Spleen (tissue), 13 donors: ENCODE measurements at regions of chr6 and their contacts with region 1.

Region 1: DNA sequence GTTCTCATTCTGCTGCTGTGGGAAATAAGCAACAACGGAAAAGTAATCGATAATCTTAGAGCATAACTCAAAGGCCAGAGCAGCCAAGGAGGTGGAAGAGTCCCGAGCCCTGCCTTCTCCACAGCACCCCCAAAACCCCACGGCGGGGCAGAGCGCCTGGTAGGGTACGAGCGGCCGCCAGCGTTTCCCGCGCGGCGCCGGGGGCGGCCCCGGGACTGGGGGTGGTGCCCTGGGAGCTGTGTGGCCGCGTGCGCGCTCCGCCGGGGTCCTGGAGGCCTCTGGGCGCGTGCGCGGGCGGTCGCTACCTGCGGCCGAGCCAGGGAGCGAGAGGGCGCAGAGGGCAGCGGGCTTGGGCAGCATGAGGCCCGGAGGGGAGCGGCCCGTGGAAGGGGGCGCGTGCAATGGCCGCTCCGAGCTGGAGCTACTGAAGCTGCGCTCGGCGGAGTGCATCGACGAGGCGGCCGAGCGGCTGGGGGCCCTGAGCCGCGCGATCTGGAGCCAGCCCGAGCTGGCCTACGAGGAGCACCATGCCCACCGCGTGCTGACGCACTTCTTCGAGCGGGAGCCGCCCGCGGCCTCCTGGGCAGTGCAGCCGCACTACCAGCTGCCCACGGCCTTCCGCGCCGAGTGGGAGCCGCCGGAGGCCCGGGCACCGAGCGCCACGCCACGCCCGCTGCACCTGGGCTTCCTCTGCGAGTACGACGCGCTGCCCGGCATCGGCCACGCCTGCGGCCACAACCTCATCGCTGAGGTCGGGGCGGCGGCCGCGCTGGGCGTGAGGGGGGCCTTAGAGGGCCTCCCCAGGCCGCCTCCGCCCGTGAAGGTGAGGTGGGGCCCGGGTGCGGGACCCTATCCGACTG is at the start of gene PM20D2:
- DNase-seq: peak; percentile 93
- H3K4me3 ChIP-seq: peak within 1 kb of the TSS; percentile 70 to 97 (median 86)
- H3K27ac ChIP-seq: peak within 1 kb of the TSS; percentile 66 to 86 (median 82)
- H3K4me1 ChIP-seq: peaks cover 3 to 34% (median 17%) of the 10 kb centered on the region in 6 donors
- H3K27me3 ChIP-seq: no peaks in the 10 kb centered on the region
- CTCF ChIP-seq: no peak
- POLR2A ChIP-seq: no peak
- total RNA-seq, gene PM20D2: 5.8 to 14.6 (median 8.3) TPM

Region 2: DNA sequence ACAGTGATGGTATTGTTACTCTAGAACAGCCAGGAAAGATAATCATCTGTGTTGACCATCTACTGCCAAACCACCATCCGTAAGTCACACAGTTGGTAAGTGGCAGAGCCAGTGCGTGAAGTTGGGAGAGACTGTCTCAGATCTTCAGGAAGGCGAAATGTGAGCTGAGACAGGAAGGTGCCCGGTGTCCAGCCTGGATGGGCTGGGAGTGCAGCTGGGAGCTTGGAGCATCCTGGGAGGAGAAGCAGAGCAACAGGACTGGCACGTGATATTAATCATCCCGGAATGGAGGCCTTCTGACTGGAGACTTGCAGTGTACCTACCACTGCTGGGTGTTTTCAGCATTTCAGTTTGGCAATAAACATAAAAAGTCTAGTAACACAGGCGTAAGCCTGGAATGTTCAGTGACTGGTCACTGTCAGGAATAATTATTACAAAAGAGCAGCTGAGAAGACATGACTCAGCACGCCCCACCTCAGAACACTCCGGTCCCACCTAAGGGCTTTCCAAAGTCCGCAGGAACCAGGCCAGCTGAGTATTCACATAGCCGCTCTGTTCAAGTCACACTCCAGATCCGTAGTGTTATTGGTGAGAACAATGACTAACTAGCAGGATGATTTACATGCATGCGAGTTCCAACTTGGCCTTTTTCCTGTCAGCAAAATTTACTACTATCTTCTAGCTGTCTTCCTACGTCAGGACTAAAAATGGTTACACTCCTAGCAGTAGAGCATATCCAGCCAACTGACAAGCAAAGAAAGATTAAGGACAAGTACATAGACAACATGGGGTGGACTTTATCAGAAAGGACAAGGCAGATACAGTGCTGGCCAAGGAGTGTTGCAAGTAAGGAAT is 110.5 kb before region 1 on chr6:
- intact Hi-C with region 1: no loop called
- DNase-seq: no peak
- H3K4me3 ChIP-seq: peak overlapping the region in 1 of 8 donors; percentile 38
- H3K27ac ChIP-seq: peak overlapping the region; percentile 51 to 89 (median 82)
- H3K4me1 ChIP-seq: peaks cover 0 to 47% (median 22%) of the 10 kb centered on the region in 6 donors
- H3K27me3 ChIP-seq: no peaks in the 10 kb centered on the region
- CTCF ChIP-seq: no peak
- POLR2A ChIP-seq: no peak

Region 3: DNA sequence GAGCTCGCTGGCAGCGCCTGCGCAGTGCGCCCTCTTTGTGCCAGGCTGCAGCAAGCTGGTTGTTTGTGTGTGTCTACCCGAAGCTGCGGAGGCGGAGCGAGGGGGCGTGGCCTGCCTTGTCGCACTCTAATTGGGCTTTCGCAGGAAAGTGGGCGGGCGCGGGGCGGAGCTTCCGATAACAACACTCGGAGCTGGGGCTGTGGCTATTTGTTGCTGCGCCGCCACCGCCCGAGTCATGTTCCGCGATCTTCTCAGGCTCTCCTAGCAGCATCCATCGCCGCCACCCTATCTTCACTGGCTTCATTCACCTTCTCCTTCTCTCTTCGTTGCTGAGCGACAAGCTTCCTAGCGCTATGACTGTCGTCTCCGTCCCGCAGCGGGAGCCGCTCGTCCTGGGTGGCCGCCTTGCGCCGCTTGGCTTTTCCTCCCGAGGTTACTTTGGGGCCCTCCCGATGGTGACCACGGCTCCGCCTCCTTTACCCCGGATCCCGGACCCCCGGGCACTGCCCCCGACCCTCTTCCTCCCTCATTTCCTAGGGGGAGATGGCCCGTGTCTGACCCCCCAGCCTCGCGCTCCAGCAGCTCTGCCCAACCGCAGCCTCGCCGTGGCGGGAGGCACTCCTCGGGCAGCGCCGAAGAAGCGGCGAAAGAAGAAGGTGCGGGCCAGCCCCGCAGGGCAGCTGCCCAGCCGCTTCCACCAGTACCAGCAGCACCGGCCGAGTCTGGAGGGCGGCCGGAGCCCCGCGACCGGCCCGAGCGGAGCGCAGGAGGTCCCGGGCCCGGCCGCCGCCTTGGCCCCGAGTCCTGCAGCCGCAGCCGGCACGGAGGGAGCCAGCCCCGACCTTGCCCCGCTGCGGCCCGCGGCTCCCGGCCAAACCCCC is 65.2 kb before region 1 on chr6 and contains the start of gene PNRC1:
- intact Hi-C with region 1: loop called (anchors 10 kb)
- DNase-seq: peak; percentile 100
- H3K4me3 ChIP-seq: peak within 1 kb of the TSS; percentile 66 to 93 (median 82)
- H3K27ac ChIP-seq: peak within 1 kb of the TSS; percentile 99 to 100 (median 100)
- H3K4me1 ChIP-seq: peaks cover 24 to 57% (median 42%) of the 10 kb centered on the region in 6 donors
- H3K27me3 ChIP-seq: no peaks in the 10 kb centered on the region
- CTCF ChIP-seq: peak in 3 of 11 experiments; percentile 9 to 34 (median 32)
- POLR2A ChIP-seq: peak; percentile 99 to 100 (median 99)
- total RNA-seq, gene PNRC1: 247 to 350 (median 316) TPM